Activated T-helper 1 cell treated with anti-CD3 and anti-CD28 coated beads, Interleukin-12 subunit alpha, Interleukin-12 subunit beta, Interleukin-2, Interleukin-4 antibody, amounts not matched to agents 30 ng/mL and 10 ng/mL and 1 ng/mL, durations not matched to agents 14 hours and 24 hours and 36 hours (primary cell): ENCODE measurements at regions of chr10 and their contacts with region 1.

Region 1: DNA sequence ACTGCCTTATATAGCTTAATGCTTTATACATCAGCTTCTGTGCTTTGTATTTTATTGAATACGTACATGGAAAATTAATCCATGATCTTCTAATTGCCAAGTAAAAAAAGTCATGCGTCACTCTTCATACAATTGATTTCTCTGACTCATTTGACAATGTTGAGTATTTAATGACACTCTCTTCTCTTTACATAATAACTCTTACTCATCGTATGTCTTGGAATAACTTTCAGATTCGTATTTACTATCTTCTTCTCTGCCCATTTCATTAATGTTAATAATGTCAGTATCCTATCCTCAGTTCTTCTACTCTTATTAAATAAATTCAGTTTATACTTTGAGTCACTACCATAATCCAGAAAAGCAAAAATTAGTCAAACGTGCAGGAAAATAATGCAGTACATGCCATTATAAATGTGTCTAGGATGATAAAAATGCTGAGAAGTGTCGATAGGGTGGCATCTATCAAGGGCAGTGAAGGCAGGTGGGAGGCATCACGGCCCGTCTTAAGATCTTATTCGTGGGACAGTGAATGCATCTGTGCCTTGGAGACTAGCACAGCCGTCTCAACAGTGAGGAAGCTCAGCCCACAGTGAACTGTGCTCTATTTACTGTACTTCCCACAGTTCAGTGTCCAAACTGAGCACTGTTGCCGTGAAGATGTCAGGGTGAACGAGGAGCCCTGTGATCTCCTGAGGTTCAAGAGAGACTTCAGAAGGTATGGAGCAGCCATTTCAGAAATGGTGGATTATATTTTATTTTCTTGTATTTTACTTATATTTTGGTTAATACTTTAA is 39.8 kb upstream of the AKR1E2 start:
- DNase-seq: no peak
- H3K4me3 Mint-ChIP-seq: no peak overlapping the region
- H3K27ac Mint-ChIP-seq: no peak overlapping the region
- H3K4me1 Mint-ChIP-seq: no peaks in the 10 kb centered on the region
- H3K27me3 Mint-ChIP-seq: peaks cover 14% of the 10 kb centered on the region

Region 2: DNA sequence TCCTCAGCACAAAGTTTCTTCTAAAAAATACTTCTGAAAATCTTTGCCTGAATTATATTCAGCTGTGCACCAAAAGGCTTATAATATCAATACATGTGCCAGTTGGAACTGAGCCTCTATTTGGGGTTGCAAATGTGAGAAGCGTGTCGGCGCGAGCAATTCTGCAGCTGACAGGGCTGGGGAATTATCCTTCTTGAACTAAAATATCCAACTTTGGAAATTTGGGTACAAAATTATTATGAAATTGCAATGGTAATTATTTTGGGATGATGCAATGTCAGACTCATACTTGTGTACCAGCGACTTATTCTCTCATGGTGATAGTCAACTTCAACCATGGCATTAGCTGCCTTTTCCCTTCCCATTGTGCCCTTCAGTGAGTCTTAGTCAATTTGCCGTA is 494.3 kb before region 1 on chr10:
- intact Hi-C with region 1: no loop called
- DNase-seq: no peak
- H3K4me3 Mint-ChIP-seq: no peak overlapping the region
- H3K27ac Mint-ChIP-seq: no peak overlapping the region
- H3K4me1 Mint-ChIP-seq: no peaks in the 10 kb centered on the region
- H3K27me3 Mint-ChIP-seq: peaks cover 2% of the 10 kb centered on the region

Region 3: DNA sequence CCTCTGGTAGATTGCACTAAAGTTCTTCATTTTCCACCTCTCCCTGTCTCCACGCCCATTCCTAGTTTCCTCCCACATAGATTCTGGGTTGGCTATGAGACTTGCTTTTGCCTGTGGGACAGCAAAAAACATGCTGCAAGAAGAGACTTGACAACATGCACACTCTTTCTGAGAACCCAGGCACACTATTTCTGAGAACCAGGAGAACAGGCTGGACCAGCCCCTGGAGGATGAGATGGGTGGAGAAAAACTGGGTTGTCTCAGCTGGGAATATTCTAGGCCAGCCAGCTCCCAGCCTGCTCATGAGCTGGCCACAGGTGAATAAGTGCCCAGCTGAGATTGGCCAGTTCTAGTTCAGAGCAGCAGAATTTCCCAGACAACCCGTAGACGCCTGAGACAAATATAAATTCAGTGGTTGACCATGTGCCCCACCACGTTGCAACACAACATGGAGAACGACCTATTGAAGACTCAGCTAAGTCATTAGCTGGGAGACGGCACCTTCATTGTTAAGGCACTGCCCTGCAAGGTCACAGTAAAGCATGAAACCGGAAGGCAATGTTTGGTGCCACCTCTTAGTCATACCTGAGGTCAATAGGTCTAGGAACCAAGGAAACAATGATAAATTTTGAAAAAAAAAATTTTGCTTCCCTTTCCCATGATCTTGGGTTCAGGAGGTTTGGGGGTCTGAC is 52.9 kb before region 1 on chr10:
- intact Hi-C with region 1: loop called (anchors 1 kb)
- DNase-seq: no peak
- H3K4me3 Mint-ChIP-seq: no peak overlapping the region
- H3K27ac Mint-ChIP-seq: no peak overlapping the region
- H3K4me1 Mint-ChIP-seq: no peaks in the 10 kb centered on the region
- H3K27me3 Mint-ChIP-seq: peaks cover 8% of the 10 kb centered on the region

Region 4: DNA sequence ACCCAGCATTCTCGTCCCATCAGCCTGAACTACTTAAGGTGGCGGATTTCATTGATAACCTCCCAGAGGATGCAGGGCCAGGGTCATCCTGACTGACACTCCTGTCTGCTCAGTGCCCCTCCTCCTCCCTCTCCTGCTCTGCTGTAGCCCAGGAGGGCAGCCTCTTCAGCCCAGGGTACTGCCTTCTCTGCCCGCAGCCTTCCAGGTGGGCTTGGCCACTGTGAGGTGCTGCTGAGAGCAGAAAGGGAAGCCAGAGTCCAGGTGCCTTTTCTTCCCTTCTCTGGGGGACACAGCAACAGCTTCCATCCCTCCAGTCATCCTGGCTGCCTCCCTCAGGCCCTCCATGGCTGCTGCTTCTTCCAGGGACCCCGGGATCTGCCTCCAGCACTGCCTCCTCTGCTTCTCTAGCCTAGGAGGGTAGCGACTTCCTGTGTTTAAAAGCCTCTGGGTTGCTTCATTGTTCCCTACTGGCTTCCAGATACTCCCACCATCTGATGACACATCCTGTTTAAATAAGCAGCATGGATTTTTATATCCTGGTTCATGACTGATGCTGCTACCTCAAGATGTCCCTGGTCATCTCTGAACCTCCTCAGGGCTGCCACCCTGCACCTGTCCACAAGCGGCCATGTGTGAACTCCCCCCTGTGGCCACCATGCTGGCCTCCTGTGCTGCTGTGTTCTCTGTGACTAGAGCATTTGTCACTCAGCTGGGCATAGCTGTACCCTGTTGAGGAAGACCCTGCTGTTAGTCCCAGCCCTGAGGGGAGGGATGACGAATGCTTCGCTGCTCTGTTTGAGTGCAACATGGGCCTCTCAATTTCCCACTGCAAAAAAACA is 466.2 kb after region 1 on chr10:
- intact Hi-C with region 1: no loop called
- DNase-seq: no peak
- H3K4me3 Mint-ChIP-seq: no peak overlapping the region
- H3K27ac Mint-ChIP-seq: no peak overlapping the region
- H3K4me1 Mint-ChIP-seq: no peaks in the 10 kb centered on the region
- H3K27me3 Mint-ChIP-seq: peaks cover 4% of the 10 kb centered on the region